Aorta (tissue), 5 donors: ENCODE measurements at regions of chr14 and their contacts with region 1.

Region 1: DNA sequence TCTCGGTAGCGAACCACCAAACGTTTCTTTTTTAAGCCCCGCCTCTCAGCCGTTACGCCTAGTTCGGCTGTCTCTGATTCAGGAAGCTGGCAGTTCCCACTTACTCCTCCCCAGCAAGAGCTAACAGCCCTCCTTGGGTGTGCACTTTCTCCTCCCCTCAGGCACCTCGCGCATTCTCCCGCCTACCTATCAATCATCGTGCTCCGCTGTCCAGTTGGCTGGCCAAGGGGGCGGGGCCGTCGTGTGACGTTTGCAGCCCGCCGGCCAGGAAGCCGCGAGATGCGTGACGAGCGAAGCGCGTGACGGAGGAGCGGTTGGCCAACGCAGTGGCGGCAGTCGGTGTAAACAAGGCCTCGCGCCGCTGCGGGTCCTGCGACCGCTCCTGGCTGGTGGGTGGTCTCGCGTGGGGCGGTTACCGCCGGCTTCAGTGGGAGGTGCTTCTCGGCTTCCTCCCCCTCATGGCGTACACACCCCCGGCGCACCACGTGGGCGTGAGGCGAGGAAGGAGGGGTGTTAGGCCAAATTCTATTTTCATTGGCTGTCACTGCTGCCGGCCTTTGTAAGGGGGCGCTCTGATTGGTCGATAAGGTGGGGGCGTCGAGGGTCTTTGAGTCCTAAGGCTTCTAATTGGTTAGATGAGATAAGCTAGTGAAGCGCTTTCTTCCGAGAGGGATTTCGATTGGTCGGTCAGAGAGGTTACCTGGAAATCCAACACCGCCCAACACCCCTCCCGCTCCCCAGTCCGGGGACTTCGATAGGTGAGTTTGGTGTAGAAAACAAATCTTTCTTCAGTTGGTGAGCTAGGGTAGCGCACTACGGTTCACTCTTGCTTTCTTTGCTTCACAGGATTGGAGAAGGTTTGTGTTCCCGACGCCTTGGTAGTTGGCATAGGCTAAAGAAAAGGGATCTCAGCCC is at the starts of genes DCAF11 and NRL:
- DNase-seq: peak; percentile 99
- ATAC-seq: peak; percentile 98
- H3K4me3 ChIP-seq: peak within 1 kb of the TSS; percentile 43 to 71
- H3K27ac ChIP-seq: peak within 1 kb of the TSS; percentile 98 to 100
- H3K4me1 ChIP-seq: no peaks in the 10 kb centered on the region
- H3K27me3 ChIP-seq: no peaks in the 10 kb centered on the region
- total RNA-seq, gene DCAF11: 35.5 to 39.6 TPM
- total RNA-seq, gene NRL: 1.1 to 1.4 TPM

Region 2: DNA sequence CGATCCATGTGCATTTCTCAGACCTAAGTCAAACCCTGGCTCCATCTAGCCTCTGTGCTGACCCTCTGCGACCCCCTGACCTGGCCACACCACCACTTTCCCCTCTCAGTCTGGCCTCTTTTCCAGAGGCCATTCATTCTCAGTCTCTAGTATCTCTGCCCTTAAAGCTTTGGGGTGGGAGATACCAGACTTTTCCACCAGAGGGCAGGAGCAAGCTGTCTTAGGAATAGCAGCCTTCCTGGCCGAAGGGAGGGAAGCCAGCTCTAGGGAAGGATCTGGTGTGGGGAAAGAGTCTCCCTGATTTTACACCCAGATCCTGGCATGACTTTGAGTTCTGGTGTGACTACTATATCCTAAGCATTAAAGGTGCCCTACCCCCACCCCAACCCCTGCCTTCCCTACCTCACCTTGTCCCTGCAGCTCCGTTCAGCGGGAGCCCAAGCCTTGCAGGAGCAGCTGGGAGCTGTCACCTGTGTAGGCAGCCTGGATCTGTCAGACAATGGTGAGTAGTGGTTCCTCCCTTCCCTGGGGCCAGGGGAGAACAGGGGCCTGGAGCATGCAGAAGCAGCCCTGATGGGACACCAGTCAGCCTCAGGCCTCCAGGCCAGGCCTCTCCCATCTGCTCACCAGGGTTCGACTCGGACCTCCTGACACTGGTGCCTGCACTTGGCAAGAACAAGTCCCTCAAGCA is 56.4 kb before region 1 on chr14:
- intact Hi-C with region 1: loop called (anchors 1 to 5 kb)
- DNase-seq: peak; percentile 78 to 83
- ATAC-seq: peak; percentile 49
- H3K4me3 ChIP-seq: no peak overlapping the region
- H3K27ac ChIP-seq: no peak overlapping the region
- H3K4me1 ChIP-seq: no peaks in the 10 kb centered on the region
- H3K27me3 ChIP-seq: no peaks in the 10 kb centered on the region

Region 3: DNA sequence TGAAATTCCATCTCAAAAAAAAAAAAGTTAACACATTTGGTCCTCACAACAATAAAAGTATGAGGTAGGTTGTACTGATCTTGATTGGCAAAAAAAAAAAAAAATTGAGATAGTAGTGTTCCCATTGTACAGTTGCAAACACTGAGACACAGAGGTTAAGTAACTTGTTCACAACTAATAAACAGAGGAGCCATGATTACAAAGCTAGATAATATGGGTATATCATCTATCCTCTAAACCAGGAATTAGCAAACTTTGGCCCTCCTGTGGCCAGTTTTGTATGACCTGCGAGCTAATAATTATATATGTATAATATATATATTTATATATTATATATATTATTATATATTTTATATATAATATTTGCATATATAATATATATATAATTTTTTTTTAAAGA is 18.9 kb after region 1 on chr14:
- intact Hi-C with region 1: loop called in 1 of 2 experiments (anchors 1 kb)
- DNase-seq: no peak
- ATAC-seq: no peak
- H3K4me3 ChIP-seq: no peak overlapping the region
- H3K27ac ChIP-seq: no peak overlapping the region
- H3K4me1 ChIP-seq: no peaks in the 10 kb centered on the region
- H3K27me3 ChIP-seq: no peaks in the 10 kb centered on the region

Region 4: GRCh38 chr14:24141097-24141880 is 26.5 kb after region 1 on chr14 and contains the start of gene EMC9:
- intact Hi-C with region 1: loop called (anchors 2 to 5 kb)
- DNase-seq: peak; percentile 100
- ATAC-seq: peak; percentile 97
- H3K4me3 ChIP-seq: peak within 1 kb of the TSS; percentile 20 to 53
- H3K27ac ChIP-seq: peak within 1 kb of the TSS in 1 of 2 donors; percentile 60
- H3K4me1 ChIP-seq: no peaks in the 10 kb centered on the region
- H3K27me3 ChIP-seq: no peaks in the 10 kb centered on the region
- total RNA-seq, gene EMC9: 12.8 to 15.3 TPM

Region 5: DNA sequence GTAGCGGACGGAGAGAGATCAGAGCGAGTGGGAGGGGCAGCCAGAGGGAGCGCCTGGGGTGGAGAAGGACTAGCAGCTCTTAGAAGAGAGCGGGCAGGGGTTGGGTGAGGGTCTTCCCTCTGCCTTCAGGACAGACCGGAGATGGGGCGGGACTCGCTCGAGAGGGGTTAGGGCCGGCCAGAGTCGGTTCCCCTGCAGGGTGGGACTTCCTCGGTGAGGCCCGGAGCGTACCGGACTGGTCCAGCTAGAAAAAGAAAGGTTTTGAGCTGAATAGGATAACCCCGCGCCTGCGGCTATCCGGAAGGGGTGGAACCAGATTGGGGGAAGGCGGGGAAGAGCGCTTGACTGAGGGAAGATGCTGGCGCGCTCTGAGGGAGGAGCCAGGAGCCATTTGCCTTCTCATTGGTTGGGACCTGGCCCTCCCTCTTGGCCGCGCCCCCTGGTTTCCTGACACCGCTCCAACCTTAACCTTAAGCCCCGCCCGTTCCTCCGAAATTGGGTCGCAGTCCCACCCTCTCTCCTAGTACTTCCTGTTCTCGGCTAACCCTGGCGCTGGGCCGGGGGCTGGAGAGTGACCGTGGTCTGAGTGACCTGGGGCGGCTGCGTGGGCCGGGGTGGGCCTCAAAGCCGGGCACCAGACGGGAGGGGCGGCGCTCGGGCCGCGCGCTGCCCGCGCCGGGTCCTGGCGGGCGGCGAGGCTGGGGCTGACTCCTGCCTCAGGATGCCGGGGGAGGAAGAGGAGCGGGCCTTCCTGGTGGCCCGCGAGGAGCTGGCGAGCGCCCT is 32.4 kb after region 1 on chr14 and contains the start of gene RNF31:
- intact Hi-C with region 1: loop called in 1 of 2 experiments (anchors 5 kb)
- DNase-seq: peak; percentile 99
- ATAC-seq: peak; percentile 97
- H3K4me3 ChIP-seq: peak within 1 kb of the TSS; percentile 46 to 52
- H3K27ac ChIP-seq: peak within 1 kb of the TSS in 1 of 2 donors; percentile 61
- H3K4me1 ChIP-seq: no peaks in the 10 kb centered on the region
- H3K27me3 ChIP-seq: no peaks in the 10 kb centered on the region
- total RNA-seq, gene RNF31: 51.6 to 61.1 TPM

Region 6: DNA sequence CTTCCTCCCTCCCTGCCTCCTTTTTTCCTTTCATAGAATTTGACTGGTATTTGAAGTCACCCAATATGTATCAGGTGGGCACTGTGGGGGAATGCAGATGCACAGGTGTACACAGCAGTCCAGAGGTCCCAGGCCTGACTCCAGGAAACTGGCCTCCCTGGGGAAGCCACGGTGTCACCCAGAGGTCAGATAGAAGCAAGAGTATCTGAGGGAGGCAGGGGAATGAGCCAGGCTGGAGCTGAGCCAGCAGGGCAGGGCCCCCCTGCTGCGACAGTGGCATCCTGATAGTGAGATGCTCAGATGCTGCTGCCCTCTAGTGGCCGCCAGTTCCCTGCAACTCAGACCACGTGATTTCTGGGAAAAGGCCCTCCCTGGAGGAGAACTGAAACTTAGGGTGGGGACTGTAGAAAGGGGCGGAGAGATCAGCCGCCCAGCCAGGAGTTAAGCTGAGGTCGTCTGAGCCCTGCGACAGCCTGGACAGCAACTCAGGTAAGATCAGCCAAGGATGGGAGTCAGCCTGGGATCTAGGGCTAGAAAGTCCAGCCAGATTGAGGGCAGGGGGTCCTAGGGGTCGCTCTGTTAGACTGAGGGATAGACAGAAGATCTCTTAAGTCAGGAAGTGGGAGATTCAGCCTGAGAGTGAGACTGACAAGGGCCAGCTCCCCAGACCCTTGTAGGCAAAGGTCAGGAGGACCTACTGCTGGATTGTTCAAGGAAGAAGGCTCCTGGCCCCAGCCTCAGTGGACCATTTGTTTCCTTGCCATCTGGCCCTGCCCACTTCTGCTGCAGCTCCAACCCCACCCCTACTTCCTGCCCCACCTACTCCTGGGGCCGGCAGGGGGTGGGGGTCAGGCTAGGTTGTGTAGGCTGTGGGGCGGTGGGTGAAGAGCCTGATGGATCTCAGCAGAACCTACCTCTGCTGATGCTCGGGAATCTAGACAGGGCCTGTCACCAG is 46.3 kb after region 1 on chr14 and contains the start of gene IRF9:
- intact Hi-C with region 1: loop called in 1 of 2 experiments (anchors 10 kb)
- DNase-seq: peak; percentile 96 to 98
- ATAC-seq: peak; percentile 96
- H3K4me3 ChIP-seq: peak within 1 kb of the TSS; percentile 56 to 67
- H3K27ac ChIP-seq: peak within 1 kb of the TSS in 1 of 2 donors; percentile 73
- H3K4me1 ChIP-seq: no peaks in the 10 kb centered on the region
- H3K27me3 ChIP-seq: no peaks in the 10 kb centered on the region
- total RNA-seq, gene IRF9: 113 to 117 TPM

Region 7: GRCh38 chr14:24431569-24432258 is 316.9 kb after region 1 on chr14:
- intact Hi-C with region 1: loop called in 1 of 2 experiments (anchors 10 kb)
- DNase-seq: peak; percentile 95 to 96
- ATAC-seq: peak; percentile 85
- H3K4me3 ChIP-seq: no peak overlapping the region
- H3K27ac ChIP-seq: no peak overlapping the region
- H3K4me1 ChIP-seq: no peaks in the 10 kb centered on the region
- H3K27me3 ChIP-seq: no peaks in the 10 kb centered on the region